Activated T-helper 2 cell treated with anti-CD3 and anti-CD28 coated beads, Interferon-gamma antibody, Interleukin-2, Interleukin-4, amounts not matched to agents 10 μg/mL and 5 μg/mL and 100 μg/mL, durations not matched to agents 14 hours and 24 hours and 36 hours (primary cell): ENCODE measurements at regions of chr4 and their contacts with region 1.

Region 1: DNA sequence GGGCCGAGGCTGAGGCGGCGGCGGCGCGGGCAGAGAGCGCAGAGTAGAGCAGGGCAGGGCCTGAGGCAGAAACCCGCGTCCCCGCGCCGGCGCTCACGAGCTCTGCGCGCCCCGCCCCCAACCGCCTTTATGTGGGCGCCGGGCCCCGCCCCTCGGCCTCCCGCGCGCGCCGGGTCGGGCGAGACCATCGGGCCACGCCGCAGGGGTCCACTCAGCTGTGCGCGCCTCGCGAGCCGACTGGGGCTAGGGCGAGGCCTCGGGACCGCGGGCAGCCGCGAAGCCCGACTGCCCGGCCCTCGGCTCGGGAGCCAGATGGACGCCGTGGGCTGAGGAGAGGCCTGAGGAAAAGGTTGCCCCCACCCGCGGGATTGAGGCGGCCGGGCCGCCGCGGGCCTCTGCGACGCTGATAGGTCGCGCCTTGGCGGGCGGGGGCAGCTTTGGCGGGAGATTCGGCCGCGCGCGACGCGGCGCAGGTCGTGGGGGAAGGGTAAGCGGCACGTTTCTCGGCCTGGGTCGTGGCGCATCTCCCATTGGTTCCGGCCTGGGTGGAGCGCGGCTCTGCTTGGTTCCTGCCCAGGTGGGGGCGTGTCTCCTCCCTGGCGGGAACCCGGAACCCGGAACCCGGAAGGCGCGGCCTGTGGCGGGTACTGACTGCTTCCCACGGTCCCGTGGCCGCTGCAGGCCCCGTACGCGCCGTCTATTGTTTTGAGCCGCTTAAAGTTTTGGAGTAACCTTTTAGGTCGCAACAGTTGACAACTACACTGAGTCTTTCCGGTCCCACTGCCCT is at the start of gene SLBP:
- DNase-seq: peak; percentile 99
- H3K4me3 Mint-ChIP-seq: peak within 1 kb of the TSS; percentile 99
- H3K27ac Mint-ChIP-seq: peak within 1 kb of the TSS; percentile 97
- H3K4me1 Mint-ChIP-seq: peaks cover 47% of the 10 kb centered on the region
- H3K27me3 Mint-ChIP-seq: no peaks in the 10 kb centered on the region
- total RNA-seq, gene SLBP: 125 and 127 TPM in 2 replicates

Region 2: GRCh38 chr4:1683736-1684505 is 28.5 kb before region 1 on chr4 and contains the start of gene FAM53A:
- intact Hi-C with region 1: loop called (anchors 1 kb)
- DNase-seq: peak; percentile 89
- H3K4me3 Mint-ChIP-seq: peak within 1 kb of the TSS; percentile 77
- H3K27ac Mint-ChIP-seq: peak within 1 kb of the TSS; percentile 76
- H3K4me1 Mint-ChIP-seq: peaks cover 11% of the 10 kb centered on the region
- H3K27me3 Mint-ChIP-seq: no peaks in the 10 kb centered on the region
- total RNA-seq, gene FAM53A: 2.7 and 3.3 TPM in 2 replicates

Region 3: DNA sequence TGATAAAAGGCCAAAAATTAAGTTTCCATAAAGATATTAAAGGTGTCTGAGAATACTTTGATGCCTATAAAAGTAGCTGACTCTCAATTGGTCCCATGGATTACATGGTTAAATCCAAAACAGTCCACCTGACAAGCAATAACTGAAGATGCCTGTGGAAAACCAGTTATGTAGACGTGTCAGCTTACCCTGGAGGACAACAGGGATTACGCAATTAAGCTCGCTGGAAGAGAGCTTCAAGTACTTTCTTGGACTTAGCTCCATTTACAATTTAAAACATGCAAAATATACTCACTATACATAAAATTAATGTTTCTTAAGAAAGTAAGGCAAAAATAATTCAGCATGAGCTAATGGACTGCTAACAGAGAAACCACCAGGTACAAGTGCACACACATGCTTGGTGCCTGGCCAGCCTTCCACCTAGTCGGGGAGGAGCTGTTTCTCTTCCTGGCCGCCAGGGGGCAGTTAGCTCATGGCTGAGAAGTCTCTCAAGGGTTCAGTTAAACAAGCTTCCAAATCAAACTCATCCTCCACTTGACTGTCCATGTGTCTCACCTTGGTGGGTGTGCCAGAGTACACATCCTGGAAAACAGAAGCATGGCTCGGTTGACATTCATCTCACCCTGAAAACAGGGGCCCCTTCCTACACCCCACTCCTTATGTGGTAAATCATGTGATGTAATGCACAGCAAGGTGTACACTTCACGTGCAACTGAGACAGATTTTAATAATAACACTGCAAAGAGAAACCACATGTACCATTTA is 19.1 kb before region 1 on chr4:
- intact Hi-C with region 1: loop called (anchors 1 kb)
- DNase-seq: peak; percentile 68
- H3K4me3 Mint-ChIP-seq: no peak overlapping the region
- H3K27ac Mint-ChIP-seq: peak overlapping the region; percentile 58
- H3K4me1 Mint-ChIP-seq: peaks cover 6% of the 10 kb centered on the region
- H3K27me3 Mint-ChIP-seq: no peaks in the 10 kb centered on the region

Region 4: DNA sequence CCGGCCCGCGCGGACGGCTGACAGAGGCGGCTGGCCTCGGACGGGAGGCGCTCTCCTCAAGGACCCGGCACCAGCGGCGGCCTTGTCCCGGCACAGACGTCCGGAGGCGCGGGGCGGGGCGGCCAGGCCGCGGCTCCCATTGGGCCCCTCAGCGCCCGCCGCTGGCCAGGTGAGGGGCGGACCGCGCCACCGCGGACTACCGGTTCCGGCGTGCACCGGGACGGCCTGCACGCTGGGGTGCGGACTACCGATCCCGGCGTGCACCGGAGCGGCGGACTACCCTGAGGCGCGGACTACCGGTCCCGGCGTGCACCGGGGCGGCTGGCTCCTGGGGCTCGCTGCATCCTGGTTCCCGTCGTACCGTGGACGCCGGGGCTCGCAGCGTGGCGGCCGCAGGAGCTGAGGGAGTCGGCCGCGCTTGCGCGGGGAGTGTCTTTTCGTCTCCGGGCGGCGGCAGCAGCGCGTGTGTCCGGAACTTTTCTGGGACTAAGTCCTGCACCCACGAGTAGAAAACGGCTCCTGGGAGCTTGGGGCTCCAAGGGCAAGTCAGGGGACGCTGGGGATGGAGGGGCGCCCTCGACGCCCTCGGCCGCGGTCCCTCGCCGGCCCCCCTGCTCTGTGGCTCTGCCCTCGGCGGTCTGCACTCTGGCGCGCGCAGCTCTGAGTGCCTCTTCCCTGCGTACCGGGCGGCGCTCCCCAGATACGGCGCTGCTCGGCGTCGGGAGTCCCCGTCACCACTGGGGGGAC is 143.8 kb after region 1 on chr4 and contains the start of gene LETM1:
- intact Hi-C with region 1: loop called (anchors 1 kb)
- DNase-seq: peak; percentile 93
- H3K4me3 Mint-ChIP-seq: peak within 1 kb of the TSS; percentile 86
- H3K27ac Mint-ChIP-seq: peak within 1 kb of the TSS; percentile 70
- H3K4me1 Mint-ChIP-seq: peaks cover 32% of the 10 kb centered on the region
- H3K27me3 Mint-ChIP-seq: no peaks in the 10 kb centered on the region
- total RNA-seq, gene LETM1: 76.6 and 78.6 TPM in 2 replicates

Region 5: GRCh38 chr4:1870578-1871443 is 158.4 kb after region 1 on chr4 and contains the start of gene NSD2:
- intact Hi-C with region 1: loop called (anchors 2 kb)
- DNase-seq: peak; percentile 86
- H3K4me3 Mint-ChIP-seq: peak within 1 kb of the TSS; percentile 99
- H3K27ac Mint-ChIP-seq: peak within 1 kb of the TSS; percentile 97
- H3K4me1 Mint-ChIP-seq: peaks cover 29% of the 10 kb centered on the region
- H3K27me3 Mint-ChIP-seq: no peaks in the 10 kb centered on the region
- total RNA-seq, gene NSD2: 208 and 214 TPM in 2 replicates

Region 6: GRCh38 chr4:2276581-2277325 is 564.3 kb after region 1 on chr4:
- intact Hi-C with region 1: no loop called
- DNase-seq: no peak
- H3K4me3 Mint-ChIP-seq: no peak overlapping the region
- H3K27ac Mint-ChIP-seq: no peak overlapping the region
- H3K4me1 Mint-ChIP-seq: peaks cover 13% of the 10 kb centered on the region
- H3K27me3 Mint-ChIP-seq: no peaks in the 10 kb centered on the region

Region 7: GRCh38 chr4:3074078-3074795 is 1361.8 kb after region 1 on chr4 and contains the starts of genes HTT and HTT-AS:
- intact Hi-C with region 1: loop called (anchors 10 kb)
- DNase-seq: peak; percentile 90
- H3K4me3 Mint-ChIP-seq: peak within 1 kb of the TSS; percentile 89
- H3K27ac Mint-ChIP-seq: peak within 1 kb of the TSS; percentile 79
- H3K4me1 Mint-ChIP-seq: peaks cover 19% of the 10 kb centered on the region
- H3K27me3 Mint-ChIP-seq: no peaks in the 10 kb centered on the region
- total RNA-seq, gene HTT: 65.3 and 71.9 TPM in 2 replicates
- total RNA-seq, gene HTT-AS: not detected in 2 replicates